Sigmoid colon (tissue), 7 donors: ENCODE measurements at regions of chr18 and their contacts with region 1.

Region 1: DNA sequence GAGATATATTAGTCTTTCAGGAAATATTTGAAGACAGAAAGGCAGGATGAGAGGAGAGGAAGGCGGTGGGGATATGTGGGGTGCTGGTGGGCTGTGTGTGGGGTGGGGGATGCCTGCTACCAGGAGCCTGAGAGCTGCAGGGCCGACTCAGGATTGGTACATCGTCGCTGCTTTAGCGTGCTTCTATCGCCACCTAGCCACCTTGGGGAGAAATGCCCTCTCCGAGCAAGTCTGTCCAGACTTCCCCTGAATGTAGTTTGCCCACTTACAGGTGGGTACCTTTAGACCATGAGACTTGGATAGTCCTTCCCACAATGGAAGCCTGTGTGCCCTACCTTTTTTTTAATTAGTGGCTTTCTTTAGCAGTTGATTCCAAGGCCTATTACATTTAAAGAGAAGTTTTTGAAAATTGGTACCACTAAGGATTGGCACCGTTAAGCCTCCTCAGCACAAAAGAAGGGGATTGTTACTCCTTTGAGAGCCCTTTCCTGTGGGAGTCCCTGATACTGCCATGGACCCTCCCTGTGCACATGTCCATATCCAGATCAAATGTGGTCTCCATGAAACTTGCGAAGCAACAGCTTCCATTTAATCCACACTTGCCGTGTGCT is 114.1 kb upstream of the NDUFV2 start:
- DNase-seq: peak; percentile 80
- H3K4me3 ChIP-seq: no peak overlapping the region
- H3K27ac ChIP-seq: peak overlapping the region in 3 of 4 donors; percentile 71 to 88 (median 80)
- H3K4me1 ChIP-seq: peaks cover 0 to 48% (median 46%) of the 10 kb centered on the region in 4 donors
- H3K27me3 ChIP-seq: no peaks in the 10 kb centered on the region
- CTCF ChIP-seq: peak; percentile 65 to 79 (median 70)
- EP300 ChIP-seq: no peak
- POLR2A ChIP-seq: no peak

Region 2: GRCh38 chr18:8654503-8655451 is 333.6 kb before region 1 on chr18:
- intact Hi-C with region 1: loop called (anchors 2 kb)
- DNase-seq: no peak
- H3K4me3 ChIP-seq: no peak overlapping the region
- H3K27ac ChIP-seq: no peak overlapping the region
- H3K4me1 ChIP-seq: no peaks in the 10 kb centered on the region
- H3K27me3 ChIP-seq: no peaks in the 10 kb centered on the region
- CTCF ChIP-seq: peak; percentile 52 to 83 (median 80)
- EP300 ChIP-seq: no peak
- POLR2A ChIP-seq: no peak

Region 3: DNA sequence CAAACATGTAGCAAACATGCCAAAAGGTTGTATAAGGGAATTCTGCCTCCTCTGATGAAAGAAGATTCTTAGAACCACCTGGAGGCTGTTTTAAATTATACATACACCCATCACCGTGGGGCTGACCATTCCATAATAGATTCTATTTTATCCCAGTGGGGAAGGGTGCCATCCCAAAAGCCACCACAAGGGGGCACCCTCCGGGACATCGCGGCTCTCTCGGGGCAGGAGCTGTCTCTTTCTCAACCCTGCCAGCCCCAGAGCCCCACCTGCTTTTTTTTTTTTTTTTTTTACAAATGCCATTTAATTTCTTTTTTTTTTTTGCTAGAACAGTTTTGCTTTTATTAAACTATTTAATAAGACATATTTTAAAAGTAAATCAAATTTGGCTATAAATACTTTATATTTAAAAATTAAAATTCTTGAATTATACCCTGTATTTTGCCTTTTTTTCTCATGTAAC is 291.6 kb before region 1 on chr18:
- intact Hi-C with region 1: loop called (anchors 1 kb)
- DNase-seq: peak; percentile 88
- H3K4me3 ChIP-seq: no peak overlapping the region
- H3K27ac ChIP-seq: peak overlapping the region in 1 of 4 donors; percentile 9
- H3K4me1 ChIP-seq: peaks cover 0 to 5% (median 4%) of the 10 kb centered on the region in 4 donors
- H3K27me3 ChIP-seq: no peaks in the 10 kb centered on the region
- CTCF ChIP-seq: peak; percentile 68 to 90 (median 83)
- EP300 ChIP-seq: no peak
- POLR2A ChIP-seq: no peak

Region 4: DNA sequence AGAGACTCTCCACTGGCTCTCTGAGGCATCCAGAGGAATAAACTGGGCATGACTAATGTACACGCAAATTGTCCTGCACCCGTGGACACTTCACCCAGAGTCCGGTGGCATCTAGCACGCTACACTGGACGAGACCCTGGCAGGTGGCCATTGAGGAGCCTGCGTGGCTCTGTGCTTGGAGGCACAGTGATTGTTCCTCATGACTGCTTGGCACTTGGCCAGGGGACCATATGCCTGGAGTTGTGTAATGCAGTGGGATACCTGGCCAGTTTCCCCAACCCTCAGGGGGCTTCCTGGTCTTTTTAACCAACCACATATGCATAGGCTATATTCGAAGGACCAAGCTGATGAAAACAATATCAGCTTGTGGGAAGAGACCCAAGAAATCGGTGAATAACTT is 216.4 kb before region 1 on chr18:
- intact Hi-C with region 1: loop called (anchors 10 kb)
- DNase-seq: peak; percentile 92
- H3K4me3 ChIP-seq: no peak overlapping the region
- H3K27ac ChIP-seq: peak overlapping the region in 3 of 4 donors; percentile 78 to 87 (median 84)
- H3K4me1 ChIP-seq: peaks cover 0 to 90% (median 50%) of the 10 kb centered on the region in 4 donors
- H3K27me3 ChIP-seq: no peaks in the 10 kb centered on the region
- CTCF ChIP-seq: no peak
- EP300 ChIP-seq: peak in 3 of 4 donors; percentile 7 to 62 (median 31)
- POLR2A ChIP-seq: no peak

Region 5: GRCh38 chr18:9147440-9148202 is 159.3 kb after region 1 on chr18:
- intact Hi-C with region 1: loop called (anchors 5 kb)
- DNase-seq: no peak
- H3K4me3 ChIP-seq: no peak overlapping the region
- H3K27ac ChIP-seq: peak overlapping the region in 3 of 4 donors; percentile 14 to 44 (median 42)
- H3K4me1 ChIP-seq: peaks cover 0 to 98% (median 70%) of the 10 kb centered on the region in 4 donors
- H3K27me3 ChIP-seq: no peaks in the 10 kb centered on the region
- CTCF ChIP-seq: peak; percentile 54 to 76 (median 70)
- EP300 ChIP-seq: no peak
- POLR2A ChIP-seq: no peak